ENCODE measurements at regions of chr4 and their contacts with region 1.

Region 1: DNA sequence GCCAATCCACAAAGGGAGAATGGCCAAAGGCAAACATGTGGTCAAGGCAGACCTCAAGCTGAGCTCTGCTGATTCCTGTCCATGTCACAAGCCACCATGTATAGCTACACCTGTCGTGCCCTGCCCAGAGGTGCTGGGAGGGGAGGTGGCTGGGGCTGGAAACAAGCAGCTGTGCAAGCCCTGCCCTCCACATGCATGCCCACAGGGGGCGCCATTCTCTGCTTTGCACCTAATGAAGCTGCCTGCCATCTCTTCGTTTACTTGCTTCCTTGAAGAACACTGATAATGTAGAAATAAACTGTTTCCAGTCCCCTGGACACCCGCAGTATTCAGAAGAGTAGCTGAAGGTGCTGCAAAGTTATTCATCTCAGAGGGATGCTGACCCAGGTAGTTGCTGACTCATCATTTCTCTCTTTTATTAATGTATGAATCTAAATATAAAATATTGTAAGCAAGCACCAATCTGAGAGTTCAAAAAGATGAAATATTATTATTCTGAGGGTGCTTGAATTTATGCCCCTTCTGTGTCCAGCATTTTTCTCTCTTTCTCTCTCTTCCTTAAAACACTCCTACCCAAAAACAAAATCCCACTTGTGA is 278.6 kb downstream of the ADGRA3 start:
- DNase-seq: peak; percentile 13
- ATAC-seq: no peak
- H3K4me3 ChIP-seq: no peak overlapping the region
- H3K27ac ChIP-seq: no peak overlapping the region
- H3K4me1 ChIP-seq: no peaks in the 10 kb centered on the region
- H3K27me3 ChIP-seq: no peaks in the 10 kb centered on the region; the same call in 1 of the 2 replicates
- CTCF ChIP-seq: peak; percentile 42
- POLR2A ChIP-seq: no peak
- RAD21 ChIP-seq: peak; percentile 43; the same call in 1 of the 2 replicates

Region 2: GRCh38 chr4:21780158-21780557 is 457.1 kb before region 1 on chr4:
- CTCF ChIA-PET with region 1: no interaction called
- POLR2A ChIA-PET with region 1: no interaction called
- dilution Hi-C with region 1: no loop called
- in situ Hi-C with region 1: no loop called
- intact Hi-C with region 1: loop called (anchors 10 kb)
- DNase-seq: peak; percentile 41
- ATAC-seq: peak; percentile 37; the same call in 1 of the 2 replicates
- H3K4me3 ChIP-seq: no peak overlapping the region
- H3K27ac ChIP-seq: no peak overlapping the region
- H3K4me1 ChIP-seq: no peaks in the 10 kb centered on the region
- H3K27me3 ChIP-seq: no peaks in the 10 kb centered on the region
- CTCF ChIP-seq: no peak
- POLR2A ChIP-seq: no peak
- RAD21 ChIP-seq: no peak

Measured in IMR-90 (cell line).